ENCODE measurements at regions of chr15 and their contacts with region 1.

Region 1: GRCh38 chr15:90648137-90649070 is 68.7 kb upstream of the BLM start:
- DNase-seq: peak; percentile 89
- ATAC-seq: peak; percentile 82
- H3K4me3 Mint-ChIP-seq: peak overlapping the region; percentile 44
- H3K27ac Mint-ChIP-seq: peak overlapping the region; percentile 87
- H3K4me1 Mint-ChIP-seq: peaks cover 27% of the 10 kb centered on the region
- H3K27me3 Mint-ChIP-seq: no peaks in the 10 kb centered on the region
- CTCF ChIP-seq: peak; percentile 97

Region 2: GRCh38 chr15:90660195-90660998 is 12.0 kb after region 1 on chr15:
- CTCF ChIA-PET with region 1: interaction called, 11 read pairs
- POLR2A ChIA-PET with region 1: no interaction called
- intact Hi-C with region 1: no loop called
- DNase-seq: peak; percentile 90
- ATAC-seq: peak; percentile 89
- H3K4me3 Mint-ChIP-seq: peak overlapping the region; percentile 56
- H3K27ac Mint-ChIP-seq: peak overlapping the region; percentile 67
- H3K4me1 Mint-ChIP-seq: peaks cover 68% of the 10 kb centered on the region
- H3K27me3 Mint-ChIP-seq: peaks cover 23% of the 10 kb centered on the region
- CTCF ChIP-seq: no peak

Region 3: GRCh38 chr15:90677807-90678790 is 29.7 kb after region 1 on chr15:
- CTCF ChIA-PET with region 1: interaction called, 24 read pairs
- POLR2A ChIA-PET with region 1: no interaction called
- intact Hi-C with region 1: no loop called
- DNase-seq: no peak
- ATAC-seq: peak; percentile 72
- H3K4me3 Mint-ChIP-seq: peak overlapping the region; percentile 18
- H3K27ac Mint-ChIP-seq: peak overlapping the region; percentile 70
- H3K4me1 Mint-ChIP-seq: peaks cover 26% of the 10 kb centered on the region
- H3K27me3 Mint-ChIP-seq: no peaks in the 10 kb centered on the region
- CTCF ChIP-seq: no peak

Region 4: DNA sequence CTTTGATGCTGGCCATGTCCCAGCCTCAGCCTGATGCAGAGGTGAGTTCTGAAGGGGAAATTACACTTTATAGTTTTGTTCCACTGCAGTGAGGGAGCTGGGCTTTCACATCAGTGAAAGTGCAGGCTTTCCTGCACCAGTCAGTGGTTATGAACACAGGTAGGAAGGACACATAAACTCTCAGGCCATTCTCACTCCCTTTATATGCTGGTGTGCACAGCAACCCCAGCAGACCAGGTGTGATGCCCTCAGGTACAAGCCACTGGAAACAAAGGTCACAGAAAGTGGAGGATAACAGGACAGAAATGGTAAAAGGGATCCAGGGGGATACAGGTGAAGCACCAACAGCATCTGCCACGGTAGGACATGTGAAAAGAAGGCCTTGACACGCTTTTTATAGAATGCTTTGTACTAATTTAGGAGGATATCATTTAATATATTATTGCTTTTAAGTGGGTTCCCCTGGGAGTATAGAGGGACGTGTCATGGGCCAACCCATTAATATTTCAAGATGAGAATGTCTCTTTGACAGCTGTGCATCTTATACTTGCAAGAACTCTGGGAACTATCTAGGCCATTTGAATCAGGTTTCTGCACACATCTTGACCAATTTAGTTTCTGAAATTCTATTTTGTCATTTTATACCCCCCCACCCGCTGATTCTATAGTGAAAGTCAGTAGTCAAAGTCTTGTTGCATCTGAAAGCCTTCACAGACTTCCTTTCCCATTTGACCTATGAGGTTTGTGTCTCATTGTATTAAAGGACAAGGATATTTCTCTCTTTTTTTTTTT is 43.8 kb after region 1 on chr15:
- CTCF ChIA-PET with region 1: interaction called, 16 read pairs
- POLR2A ChIA-PET with region 1: interaction called, 3 read pairs
- intact Hi-C with region 1: loop called (anchors 2 kb)
- DNase-seq: no peak
- ATAC-seq: no peak
- H3K4me3 Mint-ChIP-seq: no peak overlapping the region
- H3K27ac Mint-ChIP-seq: no peak overlapping the region
- H3K4me1 Mint-ChIP-seq: peaks cover 16% of the 10 kb centered on the region
- H3K27me3 Mint-ChIP-seq: no peaks in the 10 kb centered on the region
- CTCF ChIP-seq: no peak

Region 5: GRCh38 chr15:90931737-90932659 is 283.6 kb after region 1 on chr15 and contains the start of gene HDDC3:
- CTCF ChIA-PET with region 1: interaction called, 16 read pairs
- POLR2A ChIA-PET with region 1: interaction called, 5 read pairs
- intact Hi-C with region 1: no loop called
- DNase-seq: peak; percentile 94
- ATAC-seq: peak; percentile 60
- H3K4me3 Mint-ChIP-seq: peak within 1 kb of the TSS; percentile 99
- H3K27ac Mint-ChIP-seq: peak within 1 kb of the TSS; percentile 99
- H3K4me1 Mint-ChIP-seq: peaks cover 36% of the 10 kb centered on the region
- H3K27me3 Mint-ChIP-seq: no peaks in the 10 kb centered on the region
- CTCF ChIP-seq: peak; percentile 96
- total RNA-seq, gene HDDC3: 34.2 to 35.6 TPM

Measured in activated CD8-positive, alpha-beta T cell treated with anti-CD3 and anti-CD28 coated beads for 36 hours (primary cell).